MCF 10A (cell line): ENCODE measurements at regions of chr3 and their contacts with region 1.

Region 1: GRCh38 chr3:112293368-112294321 is at the start of gene SLC9C1:
- DNase-seq: peak; percentile 84
- H3K4me3 Mint-ChIP-seq: peak within 1 kb of the TSS; percentile 60
- H3K27ac Mint-ChIP-seq: peak within 1 kb of the TSS; percentile 88
- H3K4me1 Mint-ChIP-seq: peaks cover 16% of the 10 kb centered on the region
- H3K27me3 Mint-ChIP-seq: no peaks in the 10 kb centered on the region
- CTCF ChIP-seq: peak; percentile 56
- total RNA-seq, gene SLC9C1: not detected in 2 replicates

Region 2: GRCh38 chr3:112074721-112075497 is 218.7 kb before region 1 on chr3:
- CTCF ChIA-PET with region 1: no interaction called
- POLR2A ChIA-PET with region 1: no interaction called
- intact Hi-C with region 1: no loop called
- DNase-seq: peak; percentile 94
- H3K4me3 Mint-ChIP-seq: peak overlapping the region; percentile 68
- H3K27ac Mint-ChIP-seq: peak overlapping the region; percentile 97
- H3K4me1 Mint-ChIP-seq: peaks cover 25% of the 10 kb centered on the region
- H3K27me3 Mint-ChIP-seq: no peaks in the 10 kb centered on the region
- CTCF ChIP-seq: no peak

Region 3: GRCh38 chr3:112092496-112093179 is 201.0 kb before region 1 on chr3:
- CTCF ChIA-PET with region 1: no interaction called
- POLR2A ChIA-PET with region 1: no interaction called
- intact Hi-C with region 1: no loop called
- DNase-seq: no peak
- H3K4me3 Mint-ChIP-seq: no peak overlapping the region
- H3K27ac Mint-ChIP-seq: no peak overlapping the region
- H3K4me1 Mint-ChIP-seq: peaks cover 29% of the 10 kb centered on the region
- H3K27me3 Mint-ChIP-seq: no peaks in the 10 kb centered on the region
- CTCF ChIP-seq: no peak

Region 4: DNA sequence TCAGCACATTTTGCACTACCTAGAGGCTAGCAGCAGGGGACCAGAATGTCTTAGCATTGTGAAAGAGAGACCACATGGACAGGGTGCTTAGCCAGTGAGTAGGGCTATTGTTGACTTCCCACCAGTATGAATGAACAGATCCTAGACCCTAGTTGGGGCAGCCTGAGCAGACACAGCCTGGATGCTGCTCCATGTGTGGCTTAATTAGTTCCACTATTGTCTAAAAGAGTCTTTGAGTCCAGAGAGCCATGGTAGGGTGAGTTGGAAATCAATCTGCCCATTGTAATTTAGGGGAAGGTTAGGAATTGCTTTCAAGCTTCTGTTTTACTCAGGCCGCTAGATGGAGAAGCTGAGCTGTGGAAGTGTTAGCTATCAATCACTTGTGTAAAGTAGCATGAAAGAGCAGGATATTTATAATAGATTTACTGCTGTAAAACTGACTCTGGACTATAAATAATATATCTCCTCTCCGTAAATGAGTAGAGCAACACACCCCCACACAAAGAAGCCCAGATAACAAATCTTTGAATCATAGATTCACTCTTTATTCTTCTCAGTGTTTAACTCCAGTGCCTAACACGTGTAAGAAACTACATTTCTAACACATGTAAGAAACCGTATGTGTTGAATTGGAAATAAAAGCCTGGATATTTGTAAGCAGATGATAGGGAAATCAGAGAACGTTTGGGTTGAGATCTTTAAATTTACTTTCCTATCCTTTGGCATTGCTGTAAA is 156.5 kb before region 1 on chr3:
- CTCF ChIA-PET with region 1: interaction called, 89 read pairs
- POLR2A ChIA-PET with region 1: interaction called, 10 read pairs
- intact Hi-C with region 1: loop called (anchors 1 kb)
- DNase-seq: peak; percentile 74
- H3K4me3 Mint-ChIP-seq: no peak overlapping the region
- H3K27ac Mint-ChIP-seq: peak overlapping the region; percentile 22
- H3K4me1 Mint-ChIP-seq: peaks cover 26% of the 10 kb centered on the region
- H3K27me3 Mint-ChIP-seq: no peaks in the 10 kb centered on the region
- CTCF ChIP-seq: peak; percentile 64

Region 5: DNA sequence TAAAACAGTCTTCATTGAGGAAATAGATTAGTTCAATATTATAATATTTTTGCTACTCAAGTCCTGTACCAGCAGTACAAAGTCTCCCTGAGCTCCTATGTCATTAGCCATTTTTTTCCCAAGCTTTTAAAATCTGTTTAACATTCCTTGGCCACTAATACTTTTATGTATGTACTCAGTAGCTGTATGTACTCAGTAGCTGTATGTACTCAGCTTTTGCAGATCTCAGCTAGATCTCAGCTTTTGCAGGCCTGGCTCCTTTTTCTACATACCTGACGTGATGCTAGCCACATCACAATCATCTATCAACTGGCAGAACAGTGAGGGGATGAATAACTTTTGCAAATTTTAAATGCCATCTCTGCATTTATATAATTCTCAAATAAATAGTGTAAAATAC is 13.4 kb before region 1 on chr3:
- CTCF ChIA-PET with region 1: interaction called, 18 read pairs
- POLR2A ChIA-PET with region 1: interaction called, 4 read pairs
- intact Hi-C with region 1: no loop called
- DNase-seq: no peak
- H3K4me3 Mint-ChIP-seq: no peak overlapping the region
- H3K27ac Mint-ChIP-seq: no peak overlapping the region
- H3K4me1 Mint-ChIP-seq: no peaks in the 10 kb centered on the region
- H3K27me3 Mint-ChIP-seq: no peaks in the 10 kb centered on the region
- CTCF ChIP-seq: no peak

Region 6: GRCh38 chr3:112321867-112322649 is 28.4 kb after region 1 on chr3:
- CTCF ChIA-PET with region 1: interaction called, 97 read pairs
- POLR2A ChIA-PET with region 1: interaction called, 22 read pairs
- intact Hi-C with region 1: loop called (anchors 1 kb)
- DNase-seq: no peak
- H3K4me3 Mint-ChIP-seq: no peak overlapping the region
- H3K27ac Mint-ChIP-seq: no peak overlapping the region
- H3K4me1 Mint-ChIP-seq: peaks cover 20% of the 10 kb centered on the region
- H3K27me3 Mint-ChIP-seq: no peaks in the 10 kb centered on the region
- CTCF ChIP-seq: no peak

Region 7: DNA sequence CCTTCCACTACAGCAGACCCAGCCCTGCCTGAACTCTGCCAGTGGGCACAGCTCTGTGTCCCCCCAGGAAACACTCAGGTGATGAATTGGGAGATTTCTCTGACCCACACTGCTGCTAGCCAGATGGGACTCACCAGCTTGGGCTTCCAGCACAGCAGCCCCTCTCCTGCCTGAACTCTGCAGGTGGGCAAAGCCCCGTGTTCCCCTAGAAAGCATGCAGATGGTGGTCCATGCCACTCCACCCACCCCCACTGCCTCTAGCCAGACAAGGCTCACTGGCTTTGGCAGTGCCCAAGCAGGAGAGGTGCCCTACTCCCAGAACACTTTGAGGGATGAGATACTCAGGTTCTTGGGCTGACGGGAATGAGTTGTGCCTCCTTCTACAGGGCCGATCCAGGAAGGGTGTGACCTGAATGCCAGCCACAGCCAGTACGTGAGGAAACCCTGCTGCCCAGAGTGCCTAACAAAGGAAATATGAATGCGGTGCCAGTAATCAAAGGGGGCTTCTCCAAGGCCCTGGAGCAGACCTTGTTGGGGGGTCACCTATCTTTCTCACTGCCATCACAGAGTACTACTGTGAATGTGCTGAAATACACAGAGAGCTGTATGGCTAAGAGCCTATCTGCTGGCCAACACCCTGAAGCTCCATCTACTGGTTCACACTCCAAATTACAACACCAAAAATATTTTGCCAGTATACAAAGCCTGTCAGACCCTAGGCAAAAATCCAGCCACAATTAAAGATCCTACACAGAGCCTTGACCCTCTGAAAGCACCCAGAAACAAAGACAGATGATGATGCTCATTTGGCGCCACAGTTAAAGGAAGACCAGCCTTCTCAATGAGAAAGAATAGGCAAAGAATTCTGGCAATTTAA is 143.7 kb after region 1 on chr3:
- CTCF ChIA-PET with region 1: interaction called, 9 read pairs
- POLR2A ChIA-PET with region 1: no interaction called
- intact Hi-C with region 1: loop called (anchors 1 kb)
- DNase-seq: peak; percentile 63
- H3K4me3 Mint-ChIP-seq: no peak overlapping the region
- H3K27ac Mint-ChIP-seq: no peak overlapping the region
- H3K4me1 Mint-ChIP-seq: no peaks in the 10 kb centered on the region
- H3K27me3 Mint-ChIP-seq: no peaks in the 10 kb centered on the region
- CTCF ChIP-seq: peak; percentile 51